ENCODE measurements at regions of chr5 and their contacts with region 1.

Region 1: DNA sequence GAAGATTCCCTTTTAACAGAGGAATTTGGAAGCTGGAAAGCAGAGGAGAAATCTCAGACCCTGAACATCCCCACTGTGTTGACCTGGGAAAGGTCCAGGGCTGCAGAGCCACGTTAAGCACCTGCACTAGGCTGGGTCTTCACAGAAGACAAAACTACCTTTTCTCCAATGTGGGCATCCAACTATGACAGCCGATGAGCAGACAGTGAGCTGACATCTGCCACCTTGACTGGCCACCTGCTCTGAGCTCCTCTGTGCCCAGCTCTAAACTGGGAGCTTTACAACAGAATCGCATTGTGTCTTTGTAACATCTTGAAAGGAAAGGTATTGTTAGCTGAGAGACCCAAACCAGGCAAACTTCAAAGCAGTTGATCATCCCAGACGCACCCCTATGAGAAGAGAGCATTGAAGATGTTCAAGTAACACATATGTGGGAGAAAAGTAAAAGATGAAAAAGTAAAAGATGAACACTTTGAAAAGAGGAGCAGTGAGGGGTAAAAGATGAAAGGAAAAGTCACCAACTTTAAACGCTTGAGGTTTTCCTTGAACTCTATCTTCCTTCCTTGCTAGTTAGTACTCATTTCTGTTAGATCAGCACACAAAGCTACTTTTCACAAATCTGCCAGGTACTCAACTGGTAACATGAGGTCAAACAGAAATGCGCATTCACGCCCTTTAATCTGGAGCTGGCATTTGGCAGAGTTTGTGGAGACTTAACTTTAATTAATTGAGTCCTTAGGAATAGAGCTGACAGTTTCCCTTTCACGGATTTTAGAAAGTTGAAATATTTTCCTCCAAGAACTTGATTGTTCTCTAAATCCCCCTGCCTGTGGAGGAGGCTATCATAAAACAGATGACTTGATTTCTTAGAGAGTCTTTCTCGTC is 53.2 kb upstream of the CTXN3 start:
- DNase-seq: no peak
- H3K4me3 ChIP-seq: no peak overlapping the region
- H3K27ac ChIP-seq: no peak overlapping the region
- H3K4me1 ChIP-seq: no peaks in the 10 kb centered on the region
- H3K27me3 ChIP-seq: peaks cover 2% of the 10 kb centered on the region
- CTCF ChIP-seq: no peak

Region 2: GRCh38 chr5:127260686-127261085 is 335.0 kb before region 1 on chr5:
- CTCF ChIA-PET with region 1: no interaction called
- dilution Hi-C with region 1: no loop called
- in situ Hi-C with region 1: no loop called
- intact Hi-C with region 1: no loop called
- DNase-seq: no peak
- H3K4me3 ChIP-seq: no peak overlapping the region
- H3K27ac ChIP-seq: no peak overlapping the region
- H3K4me1 ChIP-seq: no peaks in the 10 kb centered on the region
- H3K27me3 ChIP-seq: peaks cover 2% of the 10 kb centered on the region
- CTCF ChIP-seq: no peak

Region 3: DNA sequence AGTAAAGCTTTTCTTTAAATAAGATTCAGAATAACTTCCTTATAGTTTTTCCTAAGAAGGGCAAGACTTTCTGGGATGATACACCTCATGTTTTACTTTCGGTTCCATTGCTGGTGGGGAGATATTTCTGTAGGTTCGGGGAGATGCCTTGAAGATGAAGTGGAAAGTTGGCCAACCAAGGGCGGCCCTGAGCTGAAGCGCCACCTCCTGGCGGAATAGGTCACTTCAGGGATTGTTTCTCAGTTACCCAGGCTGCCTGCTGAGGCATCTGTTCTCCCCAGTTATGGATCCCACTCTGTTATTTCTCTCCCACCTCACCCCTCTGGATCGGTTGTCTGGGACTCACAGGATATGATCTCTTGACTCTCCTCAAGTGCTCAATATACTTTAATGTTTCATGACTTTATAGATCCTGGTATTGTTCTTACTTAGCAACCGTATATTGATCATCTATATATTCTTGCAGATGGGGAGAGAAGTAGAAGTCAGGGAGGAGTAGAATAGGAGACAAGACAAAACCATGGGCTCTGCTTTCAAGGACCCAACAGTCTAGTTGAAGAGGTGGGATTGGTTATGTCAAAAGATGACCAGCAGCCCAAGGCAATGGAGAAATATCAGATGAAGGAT is 281.8 kb before region 1 on chr5:
- CTCF ChIA-PET with region 1: no interaction called
- dilution Hi-C with region 1: no loop called
- in situ Hi-C with region 1: no loop called
- intact Hi-C with region 1: no loop called
- DNase-seq: peak; percentile 39
- H3K4me3 ChIP-seq: no peak overlapping the region
- H3K27ac ChIP-seq: no peak overlapping the region
- H3K4me1 ChIP-seq: no peaks in the 10 kb centered on the region
- H3K27me3 ChIP-seq: peaks cover 6% of the 10 kb centered on the region
- CTCF ChIP-seq: peak; percentile 75 to 91

Region 4: DNA sequence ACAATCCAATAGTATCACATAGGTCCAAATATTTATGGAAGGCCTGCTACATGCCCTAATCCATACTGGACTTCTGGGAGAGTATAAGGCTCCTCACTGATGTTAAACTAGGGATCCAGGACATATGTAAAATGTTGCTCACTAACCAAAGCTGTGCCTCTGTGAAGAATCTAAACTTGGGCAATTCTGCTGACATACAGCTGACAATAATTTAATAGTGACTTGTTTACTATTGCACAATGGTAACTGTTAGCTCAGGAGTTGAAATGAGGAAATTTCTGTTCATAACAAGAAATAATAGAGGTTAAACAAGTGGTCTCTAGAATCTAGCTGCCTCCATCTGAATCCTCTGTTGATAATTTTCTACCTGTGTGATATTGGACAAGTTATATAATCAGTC is 38.3 kb after region 1 on chr5:
- CTCF ChIA-PET with region 1: no interaction called
- dilution Hi-C with region 1: loop called (anchors 5 kb)
- in situ Hi-C with region 1: no loop called
- intact Hi-C with region 1: no loop called
- DNase-seq: no peak
- H3K4me3 ChIP-seq: no peak overlapping the region
- H3K27ac ChIP-seq: no peak overlapping the region
- H3K4me1 ChIP-seq: no peaks in the 10 kb centered on the region
- H3K27me3 ChIP-seq: peaks cover 13% of the 10 kb centered on the region
- CTCF ChIP-seq: no peak

Measured in mammary epithelial cell (primary cell).